Activated CD4-positive, alpha-beta memory T cell treated with anti-CD3 and anti-CD28 coated beads for 36 hours (primary cell): ENCODE measurements at regions of chr5 and their contacts with region 1.

Region 1: DNA sequence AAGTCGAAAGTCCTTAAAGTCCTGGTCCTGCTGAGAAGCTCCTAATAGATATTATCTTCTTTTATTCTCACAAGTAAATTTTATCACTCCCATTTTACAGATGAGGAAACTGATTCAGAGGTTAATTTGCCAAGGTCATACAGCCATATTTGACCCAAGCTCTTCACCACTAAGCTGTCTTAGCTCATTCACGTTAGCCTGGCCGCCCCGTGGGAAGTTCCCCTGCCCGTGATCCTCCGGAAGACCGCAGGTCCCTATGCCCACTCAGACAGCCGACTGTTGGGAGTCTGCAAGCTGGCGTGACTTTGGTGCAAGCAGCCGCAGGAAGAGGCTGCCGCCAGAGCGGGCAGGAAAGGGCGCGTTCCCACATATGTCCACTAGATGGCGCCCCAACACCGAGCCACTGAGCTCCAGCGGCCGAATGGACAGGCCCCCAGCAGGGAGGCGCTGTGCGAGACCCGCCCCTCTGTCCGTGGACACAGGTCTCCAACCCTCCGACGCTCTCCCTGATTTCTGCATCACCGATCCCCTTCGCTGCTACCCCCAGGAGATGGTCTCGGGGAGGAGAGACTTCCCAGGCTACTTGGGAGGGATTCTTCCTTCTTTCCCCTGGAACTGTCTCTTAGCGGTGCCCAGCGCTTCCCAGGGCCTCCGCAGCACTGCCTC is 10.0 kb upstream of the ARAP3 start:
- DNase-seq: peak; percentile 93
- H3K4me3 Mint-ChIP-seq: peak overlapping the region; percentile 46
- H3K27ac Mint-ChIP-seq: no peak overlapping the region
- H3K4me1 Mint-ChIP-seq: peaks cover 25% of the 10 kb centered on the region
- H3K27me3 Mint-ChIP-seq: no peaks in the 10 kb centered on the region

Region 2: GRCh38 chr5:141521244-141521781 is 170.7 kb before region 1 on chr5:
- CTCF ChIA-PET with region 1: no interaction called
- POLR2A ChIA-PET with region 1: no interaction called
- intact Hi-C with region 1: no loop called
- DNase-seq: no peak
- H3K4me3 Mint-ChIP-seq: no peak overlapping the region
- H3K27ac Mint-ChIP-seq: no peak overlapping the region
- H3K4me1 Mint-ChIP-seq: peaks cover 36% of the 10 kb centered on the region
- H3K27me3 Mint-ChIP-seq: no peaks in the 10 kb centered on the region

Region 3: DNA sequence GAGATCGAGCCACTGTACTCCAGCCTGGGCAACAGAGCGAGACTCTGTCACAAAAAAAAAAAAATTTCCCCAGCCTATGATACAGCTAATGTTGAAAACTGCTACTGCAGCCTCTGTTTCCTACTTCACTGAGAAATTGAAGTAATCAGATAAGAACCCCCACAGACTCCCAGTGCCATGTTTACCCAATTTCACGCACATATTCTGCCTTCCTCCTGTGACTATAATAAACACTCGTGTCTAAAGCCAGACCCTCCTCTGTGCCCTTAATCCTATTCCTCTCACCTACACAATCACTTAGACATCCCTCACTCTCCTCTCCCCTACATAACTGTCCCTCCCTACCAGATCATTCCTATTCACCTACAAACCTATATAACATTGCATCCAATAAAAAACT is 16.3 kb before region 1 on chr5:
- CTCF ChIA-PET with region 1: interaction called, 15 read pairs
- POLR2A ChIA-PET with region 1: no interaction called
- intact Hi-C with region 1: no loop called
- DNase-seq: no peak
- H3K4me3 Mint-ChIP-seq: no peak overlapping the region
- H3K27ac Mint-ChIP-seq: no peak overlapping the region
- H3K4me1 Mint-ChIP-seq: no peaks in the 10 kb centered on the region
- H3K27me3 Mint-ChIP-seq: no peaks in the 10 kb centered on the region

Region 4: GRCh38 chr5:141734501-141735230 is 42.7 kb after region 1 on chr5:
- CTCF ChIA-PET with region 1: no interaction called
- POLR2A ChIA-PET with region 1: no interaction called
- intact Hi-C with region 1: no loop called
- DNase-seq: peak; percentile 43
- H3K4me3 Mint-ChIP-seq: no peak overlapping the region
- H3K27ac Mint-ChIP-seq: no peak overlapping the region
- H3K4me1 Mint-ChIP-seq: no peaks in the 10 kb centered on the region
- H3K27me3 Mint-ChIP-seq: peaks cover 13% of the 10 kb centered on the region

Region 5: DNA sequence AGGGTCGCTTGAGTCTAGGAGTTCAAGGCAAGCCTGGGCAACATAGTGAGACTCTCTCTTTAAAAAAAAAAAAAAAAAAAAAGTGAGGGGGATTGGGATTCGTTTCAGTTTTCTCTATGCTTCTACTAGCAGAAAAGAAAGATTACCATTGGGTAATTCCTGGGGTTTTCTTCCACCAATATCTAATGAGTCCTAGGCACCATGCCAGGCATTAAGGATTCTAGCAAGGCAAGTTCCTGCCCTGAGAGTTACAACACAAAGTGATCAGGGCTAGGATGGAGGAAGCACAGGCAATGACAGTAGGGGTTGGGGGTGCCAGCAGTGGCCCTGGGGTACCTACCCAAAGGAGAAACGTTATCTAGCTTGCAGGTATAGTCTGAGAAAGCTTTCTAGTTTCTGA is 95.4 kb after region 1 on chr5:
- CTCF ChIA-PET with region 1: no interaction called
- POLR2A ChIA-PET with region 1: no interaction called
- intact Hi-C with region 1: no loop called
- DNase-seq: no peak
- H3K4me3 Mint-ChIP-seq: no peak overlapping the region
- H3K27ac Mint-ChIP-seq: no peak overlapping the region
- H3K4me1 Mint-ChIP-seq: no peaks in the 10 kb centered on the region
- H3K27me3 Mint-ChIP-seq: peaks cover 17% of the 10 kb centered on the region

Region 6: GRCh38 chr5:141825791-141826560 is 134.0 kb after region 1 on chr5:
- CTCF ChIA-PET with region 1: interaction called, 44 read pairs
- POLR2A ChIA-PET with region 1: interaction called, 4 read pairs
- intact Hi-C with region 1: loop called (anchors 1 kb)
- DNase-seq: peak; percentile 30
- H3K4me3 Mint-ChIP-seq: no peak overlapping the region
- H3K27ac Mint-ChIP-seq: no peak overlapping the region
- H3K4me1 Mint-ChIP-seq: no peaks in the 10 kb centered on the region
- H3K27me3 Mint-ChIP-seq: peaks cover 2% of the 10 kb centered on the region

Region 7: DNA sequence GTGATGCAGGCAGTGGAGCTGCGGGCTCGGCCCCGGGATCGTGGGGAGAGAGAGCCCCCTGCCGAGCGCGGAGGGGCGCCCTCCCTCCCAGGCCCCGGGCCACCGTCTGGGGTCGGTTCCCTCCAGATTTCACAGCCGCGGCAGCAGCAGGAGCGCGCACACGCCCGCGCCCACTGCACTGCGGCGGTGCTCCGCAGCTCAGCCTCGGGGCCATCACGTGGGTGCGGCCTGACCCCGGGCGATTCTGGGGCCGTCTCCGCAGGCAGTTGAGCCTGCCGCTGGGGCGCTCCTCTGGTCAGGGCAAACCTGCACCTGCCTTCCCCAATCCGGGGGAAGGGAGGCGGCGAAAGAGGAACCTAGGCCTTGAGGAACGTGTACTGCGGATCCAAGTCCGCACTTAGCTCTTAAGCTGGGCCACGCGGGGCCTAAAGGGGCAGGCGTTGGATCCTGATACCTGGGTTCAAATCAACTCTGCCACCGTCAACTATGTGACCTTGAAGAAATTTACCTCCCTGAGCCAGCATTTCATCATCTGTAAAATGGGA is 222.3 kb after region 1 on chr5:
- CTCF ChIA-PET with region 1: interaction called, 25 read pairs
- POLR2A ChIA-PET with region 1: no interaction called
- intact Hi-C with region 1: no loop called
- DNase-seq: peak; percentile 25
- H3K4me3 Mint-ChIP-seq: no peak overlapping the region
- H3K27ac Mint-ChIP-seq: no peak overlapping the region
- H3K4me1 Mint-ChIP-seq: peaks cover 8% of the 10 kb centered on the region
- H3K27me3 Mint-ChIP-seq: peaks cover 22% of the 10 kb centered on the region

Region 8: GRCh38 chr5:141968914-141969608 is 277.1 kb after region 1 on chr5 and contains the start of gene RNF14:
- CTCF ChIA-PET with region 1: interaction called, 277 read pairs
- POLR2A ChIA-PET with region 1: interaction called, 20 read pairs
- intact Hi-C with region 1: loop called (anchors 2 kb)
- DNase-seq: peak; percentile 97
- H3K4me3 Mint-ChIP-seq: peak within 1 kb of the TSS; percentile 97
- H3K27ac Mint-ChIP-seq: peak within 1 kb of the TSS; percentile 96
- H3K4me1 Mint-ChIP-seq: peaks cover 28% of the 10 kb centered on the region
- H3K27me3 Mint-ChIP-seq: no peaks in the 10 kb centered on the region
- total RNA-seq, gene RNF14: 34.6 to 39.5 TPM

Region 9: DNA sequence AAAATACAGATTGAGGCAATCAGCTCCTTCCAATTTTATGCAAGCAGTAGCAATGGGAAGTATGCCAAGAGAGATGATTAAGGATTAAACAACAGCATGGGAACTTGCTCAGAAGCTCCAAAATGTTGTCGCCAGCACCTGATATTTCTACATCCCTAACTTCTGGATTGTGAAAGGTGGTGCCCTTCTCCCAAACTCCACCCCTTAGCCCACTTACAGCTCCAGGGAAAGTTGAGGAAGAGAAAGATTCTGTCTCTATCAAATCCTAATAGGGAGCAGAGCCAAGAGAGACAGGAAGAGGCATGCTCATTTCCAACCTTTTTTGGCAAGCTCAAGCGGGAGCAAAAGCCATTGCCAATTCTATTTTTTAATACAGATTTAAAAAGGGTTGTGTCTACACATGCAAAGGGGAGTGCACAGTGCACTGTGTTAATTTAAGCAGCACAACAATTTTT is 1803.8 kb after region 1 on chr5:
- CTCF ChIA-PET with region 1: no interaction called
- POLR2A ChIA-PET with region 1: no interaction called
- intact Hi-C with region 1: no loop called
- DNase-seq: no peak
- H3K4me3 Mint-ChIP-seq: no peak overlapping the region
- H3K27ac Mint-ChIP-seq: no peak overlapping the region
- H3K4me1 Mint-ChIP-seq: no peaks in the 10 kb centered on the region
- H3K27me3 Mint-ChIP-seq: no peaks in the 10 kb centered on the region